Uterus (tissue), 4 donors: ENCODE measurements at regions of chr12 and their contacts with region 1.

Region 1: DNA sequence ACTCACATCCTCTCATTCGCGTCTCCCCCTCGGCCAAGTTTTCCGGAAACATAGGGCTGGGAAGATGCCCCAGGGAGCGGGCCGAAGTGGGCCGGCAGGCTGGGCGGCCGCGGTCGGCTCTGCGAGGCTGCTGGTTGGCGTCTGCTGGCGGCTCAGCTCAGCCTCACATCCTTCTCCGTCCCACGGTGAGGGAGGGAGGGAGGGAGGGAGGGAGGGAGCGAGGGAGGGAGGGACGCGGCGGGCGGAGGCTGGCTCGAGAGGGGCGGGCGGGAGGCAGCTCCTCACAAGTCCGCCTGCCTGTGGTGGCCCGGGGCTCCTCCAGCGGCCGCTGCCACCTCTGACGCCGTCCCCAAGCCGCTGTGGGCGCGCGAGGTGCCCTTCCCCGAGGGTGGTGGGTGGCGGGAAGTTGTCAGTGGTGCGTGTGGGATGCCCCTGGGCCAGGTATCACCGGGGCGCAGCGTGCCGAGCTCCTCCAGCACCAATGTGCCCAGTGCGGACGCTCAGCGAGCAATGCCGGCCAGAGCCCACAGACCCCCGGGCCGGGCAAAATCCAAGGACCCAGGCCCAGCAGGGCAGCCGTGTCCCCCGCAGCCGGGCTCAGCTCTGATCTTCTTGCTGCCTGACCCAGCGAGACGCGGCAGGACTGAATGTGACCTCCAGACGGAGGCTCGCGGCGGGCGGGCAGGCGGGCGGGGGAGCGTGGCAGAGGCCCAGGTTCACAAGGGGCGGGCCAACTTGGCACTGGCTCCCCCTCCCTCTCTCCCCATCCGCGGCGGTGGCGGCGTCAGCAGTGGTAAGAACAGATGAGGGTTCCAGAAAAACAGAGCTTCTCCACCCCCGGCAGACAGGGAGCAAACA is 94.0 kb downstream of the RFLNA start:
- DNase-seq: peak; percentile 87 to 89
- H3K4me3 ChIP-seq: peak overlapping the region; percentile 41 to 42
- H3K27ac ChIP-seq: peak overlapping the region; percentile 87 to 90
- H3K4me1 ChIP-seq: peaks cover 22 to 49% of the 10 kb centered on the region in 2 donors
- H3K27me3 ChIP-seq: no peaks in the 10 kb centered on the region
- CTCF ChIP-seq: no peak
- POLR2A ChIP-seq: peak in 1 of 2 donors; percentile 52

Region 2: DNA sequence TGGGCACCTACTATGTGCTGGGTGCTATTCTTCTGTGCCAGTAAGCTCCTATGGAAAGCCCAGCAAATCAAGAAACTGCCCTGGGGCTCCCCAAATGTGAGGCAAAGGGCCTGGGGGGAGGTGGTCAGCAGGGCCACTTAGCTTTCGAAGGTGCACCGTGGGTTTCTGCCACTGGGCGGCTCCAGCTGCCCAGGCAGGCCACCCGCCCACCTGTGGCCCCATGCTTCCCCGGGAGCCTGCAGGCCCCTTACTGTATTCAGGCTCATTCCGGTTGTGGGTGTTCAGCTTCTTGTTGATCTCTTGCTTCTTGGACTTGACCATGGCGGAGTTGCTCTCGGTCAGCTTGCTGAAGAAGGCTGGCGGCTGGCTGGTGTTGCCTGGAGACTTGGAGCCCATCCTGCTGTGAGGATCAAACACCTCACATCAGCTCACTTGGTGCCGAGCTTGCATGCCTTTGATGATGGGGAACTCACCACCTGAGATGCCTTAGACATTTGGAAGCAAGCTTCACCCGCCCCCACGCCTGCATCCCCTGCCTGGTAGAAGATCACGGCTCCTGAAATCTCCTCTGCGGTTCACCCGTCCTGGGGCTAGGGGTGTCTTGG is 56.7 kb before region 1 on chr12:
- intact Hi-C with region 1: no loop called
- DNase-seq: no peak
- H3K4me3 ChIP-seq: no peak overlapping the region
- H3K27ac ChIP-seq: no peak overlapping the region
- H3K4me1 ChIP-seq: no peaks in the 10 kb centered on the region
- H3K27me3 ChIP-seq: no peaks in the 10 kb centered on the region
- CTCF ChIP-seq: no peak
- POLR2A ChIP-seq: no peak

Region 3: GRCh38 chr12:124422570-124423523 is 33.9 kb after region 1 on chr12:
- intact Hi-C with region 1: loop called (anchors 5 kb)
- DNase-seq: peak; percentile 95 to 96
- H3K4me3 ChIP-seq: peak overlapping the region in 1 of 2 donors; percentile 39
- H3K27ac ChIP-seq: peak overlapping the region; percentile 87 to 96
- H3K4me1 ChIP-seq: peaks cover 9 to 29% of the 10 kb centered on the region in 2 donors
- H3K27me3 ChIP-seq: no peaks in the 10 kb centered on the region
- CTCF ChIP-seq: peak in 1 of 4 experiments; percentile 40
- POLR2A ChIP-seq: peak in 1 of 2 donors; percentile 15